Psoas muscle (tissue), 8 donors: ENCODE measurements at regions of chr16 and their contacts with region 1.

Region 1: GRCh38 chr16:25372716-25373115 is 115.1 kb upstream of the ZKSCAN2 start:
- DNase-seq: no peak
- ATAC-seq: no peak
- H3K4me3 ChIP-seq: no peak overlapping the region
- H3K27ac ChIP-seq: no peak overlapping the region
- H3K4me1 ChIP-seq: no peaks in the 10 kb centered on the region
- H3K27me3 ChIP-seq: no peaks in the 10 kb centered on the region
- CTCF ChIP-seq: no peak

Region 2: GRCh38 chr16:25390761-25391160 is 18.0 kb after region 1 on chr16:
- intact Hi-C with region 1: no loop called
- DNase-seq: no peak
- ATAC-seq: no peak
- H3K4me3 ChIP-seq: no peak overlapping the region
- H3K27ac ChIP-seq: no peak overlapping the region
- H3K4me1 ChIP-seq: no peaks in the 10 kb centered on the region
- H3K27me3 ChIP-seq: no peaks in the 10 kb centered on the region
- CTCF ChIP-seq: no peak

Region 3: DNA sequence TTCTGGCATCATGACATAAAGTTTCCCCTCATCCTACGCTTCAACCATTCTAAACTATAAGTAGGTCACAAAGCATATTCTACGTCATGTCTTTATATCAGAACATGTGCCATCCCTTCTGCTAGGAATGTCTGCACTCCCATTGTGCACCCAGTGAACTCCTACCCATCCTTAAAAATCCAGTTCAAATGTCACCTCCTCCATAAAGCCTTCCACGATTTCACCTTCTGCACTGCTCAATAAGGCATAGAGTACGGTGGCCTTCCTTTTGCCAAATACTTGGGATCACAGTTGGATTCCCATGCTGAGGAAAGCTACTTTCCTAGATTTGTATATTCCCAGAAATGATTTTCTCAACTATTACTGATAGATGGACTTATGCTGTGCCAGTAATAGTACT is 71.3 kb after region 1 on chr16:
- intact Hi-C with region 1: no loop called
- DNase-seq: no peak
- ATAC-seq: no peak
- H3K4me3 ChIP-seq: no peak overlapping the region
- H3K27ac ChIP-seq: no peak overlapping the region
- H3K4me1 ChIP-seq: no peaks in the 10 kb centered on the region
- H3K27me3 ChIP-seq: no peaks in the 10 kb centered on the region
- CTCF ChIP-seq: no peak

Region 4: DNA sequence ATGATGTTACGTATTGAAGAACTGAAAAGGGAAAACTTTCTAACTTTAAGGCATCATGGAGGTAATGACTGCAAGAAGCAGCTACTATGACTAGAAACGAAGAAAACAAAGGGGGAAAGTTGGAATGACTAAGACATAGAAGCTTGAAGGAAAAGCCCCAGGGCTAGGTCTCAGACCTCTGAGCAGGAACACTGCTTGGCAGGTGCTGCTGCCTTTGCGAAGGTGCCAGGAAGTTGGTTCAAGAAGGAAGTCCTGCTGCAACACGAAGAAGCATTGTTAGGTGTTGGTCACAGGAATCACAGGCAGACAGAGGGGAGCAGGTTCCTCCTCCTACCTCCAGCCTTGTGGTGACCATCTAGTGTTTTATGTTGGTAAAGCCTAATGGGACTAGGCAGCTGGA is 270.9 kb after region 1 on chr16:
- intact Hi-C with region 1: loop called in 1 of 2 experiments (anchors 10 kb)
- DNase-seq: no peak
- ATAC-seq: no peak
- H3K4me3 ChIP-seq: no peak overlapping the region
- H3K27ac ChIP-seq: no peak overlapping the region
- H3K4me1 ChIP-seq: no peaks in the 10 kb centered on the region
- H3K27me3 ChIP-seq: no peaks in the 10 kb centered on the region
- CTCF ChIP-seq: no peak